ENCODE measurements at regions of chr12 and their contacts with region 1.

Region 1: DNA sequence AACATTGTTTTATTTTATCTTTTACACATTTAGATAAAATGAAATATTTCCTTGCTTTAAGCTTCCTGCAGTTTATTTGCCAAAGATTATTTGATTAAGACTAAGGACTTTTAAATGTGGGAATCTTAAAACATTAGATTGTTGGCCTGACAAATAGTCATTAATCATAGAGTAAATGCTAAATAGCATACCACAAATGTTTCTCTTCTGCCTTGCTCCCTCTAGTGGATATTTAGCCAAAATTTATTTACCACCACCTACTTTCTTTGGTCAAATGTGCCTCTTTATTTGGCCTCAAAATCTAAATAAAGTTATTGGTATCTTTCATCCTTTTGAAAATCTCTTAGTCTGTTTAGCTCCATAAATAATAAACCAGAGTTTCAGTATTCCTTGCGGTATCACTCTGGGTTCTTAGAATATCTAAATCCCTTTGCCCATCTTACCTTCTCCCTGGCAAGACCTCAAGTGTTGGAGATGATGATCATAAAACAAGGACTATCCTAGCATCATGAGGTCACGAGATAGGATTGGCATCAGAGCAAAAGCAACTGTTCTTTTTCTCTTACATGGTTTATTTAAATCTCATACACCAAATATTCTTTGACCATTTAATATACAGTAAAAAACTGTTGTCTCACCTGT is 150.6 kb upstream of the AEBP2 start:
- DNase-seq: peak; percentile 32
- ATAC-seq: peak; percentile 61; the same call in 2 of the 3 replicates
- H3K4me3 ChIP-seq: no peak overlapping the region
- H3K27ac ChIP-seq: no peak overlapping the region
- H3K4me1 ChIP-seq: peaks cover 7% of the 10 kb centered on the region
- H3K27me3 ChIP-seq: no peaks in the 10 kb centered on the region
- CTCF ChIP-seq: peak; percentile 54
- EP300 ChIP-seq: no peak
- POLR2A ChIP-seq: no peak
- RAD21 ChIP-seq: no peak

Region 2: GRCh38 chr12:18430425-18431048 is 858.2 kb before region 1 on chr12:
- CTCF ChIA-PET with region 1: interaction called, 3 read pairs
- POLR2A ChIA-PET with region 1: no interaction called
- in situ Hi-C with region 1: loop called (anchors 25 kb)
- intact Hi-C with region 1: loop called (anchors 1 kb)
- DNase-seq: peak; percentile 24
- ATAC-seq: peak; percentile 93
- H3K4me3 ChIP-seq: no peak overlapping the region
- H3K27ac ChIP-seq: no peak overlapping the region
- H3K4me1 ChIP-seq: no peaks in the 10 kb centered on the region
- H3K27me3 ChIP-seq: no peaks in the 10 kb centered on the region
- CTCF ChIP-seq: peak; percentile 74
- EP300 ChIP-seq: no peak
- POLR2A ChIP-seq: no peak
- RAD21 ChIP-seq: no peak